A673 (cell line): ENCODE measurements at regions of chr12 and their contacts with region 1.

Region 1: DNA sequence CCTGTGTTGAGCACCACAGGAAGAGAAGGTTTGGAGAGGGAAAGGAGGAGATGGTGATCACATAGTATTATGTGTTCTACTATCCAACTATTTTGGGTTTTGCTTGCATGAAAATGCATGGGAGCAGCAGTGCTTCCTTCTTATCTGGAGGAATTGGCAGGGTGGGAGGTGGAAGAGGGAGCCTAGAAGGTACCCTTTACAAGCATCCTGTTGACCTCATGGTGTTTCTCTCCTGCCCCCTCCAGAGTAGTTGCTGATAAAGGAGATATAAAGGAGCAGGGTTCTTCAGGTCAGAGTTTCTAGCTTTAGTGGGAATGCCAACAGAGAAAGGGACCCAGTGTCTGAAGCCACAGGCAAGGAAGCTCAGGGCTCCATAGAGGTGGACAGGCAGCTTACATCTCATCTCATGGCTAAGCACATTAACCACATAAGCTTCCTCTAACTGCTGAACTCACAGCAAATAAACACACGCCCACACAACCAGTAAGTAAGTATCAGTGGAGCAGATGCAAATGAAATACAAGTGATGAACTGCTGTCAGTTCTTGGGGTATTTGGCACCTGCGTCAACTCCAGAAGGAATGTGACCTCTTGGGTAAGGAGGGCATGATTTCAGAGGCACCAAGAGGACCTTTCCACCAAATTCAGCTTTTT is 174.2 kb upstream of the SLC38A2 start:
- DNase-seq: peak; percentile 64
- H3K4me3 ChIP-seq: no peak overlapping the region
- H3K27ac ChIP-seq: peak overlapping the region; percentile 87
- H3K4me1 ChIP-seq: peaks cover 54% of the 10 kb centered on the region
- H3K27me3 ChIP-seq: no peaks in the 10 kb centered on the region
- CTCF ChIP-seq: no peak

Region 2: GRCh38 chr12:46473634-46474329 is 73.0 kb before region 1 on chr12:
- CTCF ChIA-PET with region 1: no interaction called
- POLR2A ChIA-PET with region 1: no interaction called
- intact Hi-C with region 1: loop called (anchors 5 kb)
- DNase-seq: peak; percentile 95
- H3K4me3 ChIP-seq: no peak overlapping the region
- H3K27ac ChIP-seq: peak overlapping the region; percentile 89
- H3K4me1 ChIP-seq: peaks cover 37% of the 10 kb centered on the region
- H3K27me3 ChIP-seq: no peaks in the 10 kb centered on the region
- CTCF ChIP-seq: no peak

Region 3: GRCh38 chr12:46516933-46517578 is 29.7 kb before region 1 on chr12:
- CTCF ChIA-PET with region 1: no interaction called
- POLR2A ChIA-PET with region 1: no interaction called
- intact Hi-C with region 1: no loop called
- DNase-seq: no peak
- H3K4me3 ChIP-seq: no peak overlapping the region
- H3K27ac ChIP-seq: no peak overlapping the region
- H3K4me1 ChIP-seq: peaks cover 3% of the 10 kb centered on the region
- H3K27me3 ChIP-seq: no peaks in the 10 kb centered on the region
- CTCF ChIP-seq: no peak

Region 4: DNA sequence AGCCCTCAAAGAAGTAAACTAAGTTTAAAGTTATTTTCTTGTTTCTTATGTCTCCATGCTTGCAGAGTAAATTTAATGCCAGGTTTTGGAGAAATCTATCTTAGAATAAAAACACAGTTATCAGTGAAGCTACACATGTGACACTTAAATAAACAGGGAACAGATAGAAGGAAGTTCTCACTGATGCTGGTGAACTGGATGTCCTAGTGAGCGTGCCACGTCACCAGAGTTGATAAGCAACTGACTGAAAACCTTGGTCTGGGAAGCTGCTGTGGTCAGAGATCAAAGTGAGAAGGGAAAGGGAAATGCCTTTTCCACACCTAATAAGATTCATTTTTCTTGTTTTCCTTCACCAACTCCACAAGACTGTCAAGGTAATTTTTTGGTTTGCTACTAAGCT is 457.9 kb after region 1 on chr12:
- CTCF ChIA-PET with region 1: no interaction called
- POLR2A ChIA-PET with region 1: no interaction called
- intact Hi-C with region 1: no loop called
- DNase-seq: no peak
- H3K4me3 ChIP-seq: no peak overlapping the region
- H3K27ac ChIP-seq: no peak overlapping the region
- H3K4me1 ChIP-seq: no peaks in the 10 kb centered on the region
- H3K27me3 ChIP-seq: no peaks in the 10 kb centered on the region
- CTCF ChIP-seq: no peak